Endothelial cell of umbilical vein (primary cell): ENCODE measurements at regions of chr15 and their contacts with region 1.

Region 1: GRCh38 chr15:45166834-45167630 is 20.7 kb downstream of the SHF start:
- DNase-seq: peak; percentile 72
- H3K4me3 ChIP-seq: peak overlapping the region; percentile 54 to 76 (median 61)
- H3K27ac ChIP-seq: peak overlapping the region; percentile 79
- H3K4me1 ChIP-seq: peaks cover 3% of the 10 kb centered on the region
- H3K27me3 ChIP-seq: no peaks in the 10 kb centered on the region
- CTCF ChIP-seq: peak; percentile 52 to 74
- POLR2A ChIP-seq: no peak

Region 2: DNA sequence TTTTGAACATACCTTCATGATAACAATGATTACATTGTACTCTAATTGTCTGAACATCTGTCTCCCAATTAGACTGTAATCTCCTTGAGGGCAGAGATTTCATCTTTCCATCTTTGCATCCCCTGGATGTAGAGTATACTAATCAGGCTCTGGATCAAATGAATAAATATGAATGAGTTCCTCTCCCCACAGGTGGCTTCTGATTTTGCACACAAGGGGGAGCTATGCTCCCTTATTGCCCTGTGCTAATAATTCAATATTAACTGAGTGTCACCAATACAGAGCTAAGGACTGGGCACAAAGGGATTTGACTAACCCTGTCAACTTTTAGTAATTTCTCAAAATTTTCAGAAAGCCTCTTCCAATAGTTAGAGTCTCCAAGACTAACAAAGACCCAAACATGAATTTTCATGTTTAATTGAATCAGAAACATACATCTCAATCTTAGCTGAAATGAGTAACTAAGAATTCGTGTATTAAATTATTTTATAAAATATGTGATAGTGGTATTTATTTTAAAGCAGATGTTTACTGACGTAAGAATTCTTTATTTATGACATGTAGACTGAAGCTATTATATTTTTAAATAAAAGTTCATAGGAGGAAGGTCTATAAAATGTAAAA is 40.4 kb before region 1 on chr15:
- CTCF ChIA-PET with region 1: interaction called, 25 read pairs
- POLR2A ChIA-PET with region 1: no interaction called
- dilution Hi-C with region 1: no loop called
- intact Hi-C with region 1: no loop called
- DNase-seq: peak; percentile 37
- H3K4me3 ChIP-seq: no peak overlapping the region
- H3K27ac ChIP-seq: no peak overlapping the region
- H3K4me1 ChIP-seq: peaks cover 6% of the 10 kb centered on the region
- H3K27me3 ChIP-seq: peaks cover 57 to 77% of the 10 kb centered on the region in 2 experiments
- CTCF ChIP-seq: peak; percentile 44 to 50
- POLR2A ChIP-seq: no peak

Region 3: GRCh38 chr15:45187894-45188830 is 21.1 kb after region 1 on chr15 and contains the start of gene SHF:
- CTCF ChIA-PET with region 1: interaction called, 24 read pairs
- POLR2A ChIA-PET with region 1: no interaction called
- dilution Hi-C with region 1: no loop called
- intact Hi-C with region 1: no loop called
- DNase-seq: peak; percentile 49
- H3K4me3 ChIP-seq: peak within 1 kb of the TSS; percentile 43 to 68 (median 67)
- H3K27ac ChIP-seq: no peak within 1 kb of the TSS
- H3K4me1 ChIP-seq: peaks cover 6% of the 10 kb centered on the region
- H3K27me3 ChIP-seq: peaks cover 2 to 9% of the 10 kb centered on the region in 2 experiments
- CTCF ChIP-seq: no peak
- POLR2A ChIP-seq: no peak
- total RNA-seq, gene SHF: 5.2 and 5.6 TPM in 2 replicates

Region 4: GRCh38 chr15:45279024-45279698 is 112.1 kb after region 1 on chr15:
- CTCF ChIA-PET with region 1: no interaction called
- POLR2A ChIA-PET with region 1: no interaction called
- dilution Hi-C with region 1: no loop called
- intact Hi-C with region 1: loop called (anchors 1 kb)
- DNase-seq: peak; percentile 96
- H3K4me3 ChIP-seq: peak overlapping the region; percentile 10 to 60 (median 46)
- H3K27ac ChIP-seq: peak overlapping the region; percentile 32
- H3K4me1 ChIP-seq: peaks cover 8% of the 10 kb centered on the region
- H3K27me3 ChIP-seq: no peaks in the 10 kb centered on the region
- CTCF ChIP-seq: no peak
- POLR2A ChIP-seq: peak; percentile 79

Region 5: GRCh38 chr15:45429974-45430792 is 263.2 kb after region 1 on chr15:
- CTCF ChIA-PET with region 1: interaction called, 14 read pairs
- POLR2A ChIA-PET with region 1: no interaction called
- dilution Hi-C with region 1: no loop called
- intact Hi-C with region 1: no loop called
- DNase-seq: peak; percentile 50
- H3K4me3 ChIP-seq: peak overlapping the region in 2 of 3 experiments; percentile 32 to 55
- H3K27ac ChIP-seq: no peak overlapping the region
- H3K4me1 ChIP-seq: peaks cover 5% of the 10 kb centered on the region
- H3K27me3 ChIP-seq: peaks cover 2 to 14% of the 10 kb centered on the region in 2 experiments
- CTCF ChIP-seq: peak; percentile 100
- POLR2A ChIP-seq: no peak